Activated CD8-positive, alpha-beta T cell treated with anti-CD3 and anti-CD28 coated beads for 36 hours (primary cell): ENCODE measurements at regions of chr13 and their contacts with region 1.

Region 1: DNA sequence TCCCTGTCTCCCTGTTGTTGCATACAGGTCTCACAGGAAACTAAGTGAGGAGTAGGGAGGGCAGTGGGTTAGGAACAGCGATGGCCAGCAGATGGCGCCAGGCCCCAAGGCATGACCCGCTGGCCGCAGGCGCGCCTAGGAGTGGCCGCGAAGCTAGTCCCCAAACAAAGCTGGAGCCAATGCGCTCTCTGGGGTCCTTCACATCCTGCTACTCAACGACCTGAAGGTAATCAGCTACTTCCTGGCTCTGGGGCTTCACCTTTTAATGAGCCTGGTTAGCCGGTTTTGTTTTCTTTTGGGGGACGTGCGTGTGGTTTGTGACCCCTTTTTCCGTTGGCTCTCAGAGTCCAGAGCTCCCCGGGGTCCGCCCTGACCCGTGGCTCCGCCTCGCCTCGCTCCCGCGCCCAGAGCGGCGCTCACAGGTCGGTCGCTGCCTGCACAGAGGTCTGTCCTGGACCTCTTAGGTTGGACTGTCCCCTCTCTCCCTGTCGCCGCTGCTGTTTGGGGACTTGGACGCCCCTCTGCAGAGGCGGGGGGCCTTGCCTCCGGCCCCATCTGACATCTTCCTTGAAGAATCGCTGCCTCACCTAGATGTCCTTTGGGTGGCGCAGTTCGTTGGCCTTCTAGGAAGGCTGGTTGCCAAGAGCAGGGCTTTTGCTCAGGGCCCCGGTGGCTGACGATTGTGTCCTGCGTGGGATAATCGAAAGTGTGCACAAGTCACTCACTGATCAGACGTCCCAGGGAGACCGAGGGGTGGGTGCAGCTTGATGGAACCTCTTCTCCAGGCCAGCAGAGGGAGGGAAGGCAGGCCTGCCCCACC is 62.1 kb upstream of the GTF3A start:
- DNase-seq: peak; percentile 90
- ATAC-seq: peak; percentile 98
- H3K4me3 Mint-ChIP-seq: peak overlapping the region; percentile 48
- H3K27ac Mint-ChIP-seq: no peak overlapping the region
- H3K4me1 Mint-ChIP-seq: peaks cover 4% of the 10 kb centered on the region
- H3K27me3 Mint-ChIP-seq: peaks cover 7% of the 10 kb centered on the region
- CTCF ChIP-seq: peak; percentile 87

Region 2: DNA sequence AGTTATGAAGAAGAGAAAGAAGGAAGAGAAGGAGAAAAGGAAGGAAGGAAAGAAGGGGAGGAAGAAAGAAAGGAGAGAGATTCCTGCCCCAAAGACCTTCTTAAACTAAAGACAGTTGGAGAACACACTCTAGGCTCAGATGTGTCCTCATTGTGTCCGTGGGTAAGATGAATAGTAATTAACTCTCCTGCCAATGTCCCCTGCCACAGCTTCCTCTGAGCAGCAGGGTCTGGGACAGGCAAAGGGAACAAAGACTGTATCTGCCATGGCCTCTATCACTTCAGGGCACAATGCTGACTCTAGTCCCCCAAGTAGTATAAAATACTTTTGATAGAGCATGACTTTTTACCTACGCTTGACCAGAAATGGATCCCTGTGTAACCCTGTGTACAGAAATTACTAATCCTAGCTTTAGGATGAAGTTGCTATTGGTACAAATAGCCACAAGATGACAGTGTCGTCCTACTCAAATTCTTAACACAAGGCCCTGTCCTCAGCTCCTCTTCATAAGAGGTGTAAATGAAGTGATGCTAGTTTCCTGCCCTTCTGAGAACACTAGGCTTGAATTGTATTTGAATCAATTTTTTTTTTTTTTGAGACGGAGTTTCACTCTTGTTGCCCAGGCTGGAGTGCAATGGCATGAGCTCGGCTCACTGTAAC is 415.5 kb before region 1 on chr13:
- CTCF ChIA-PET with region 1: interaction called, 17 read pairs
- POLR2A ChIA-PET with region 1: no interaction called
- intact Hi-C with region 1: no loop called
- DNase-seq: peak; percentile 6
- ATAC-seq: peak; percentile 80
- H3K4me3 Mint-ChIP-seq: no peak overlapping the region
- H3K27ac Mint-ChIP-seq: no peak overlapping the region
- H3K4me1 Mint-ChIP-seq: no peaks in the 10 kb centered on the region
- H3K27me3 Mint-ChIP-seq: peaks cover 1% of the 10 kb centered on the region
- CTCF ChIP-seq: peak; percentile 46

Region 3: DNA sequence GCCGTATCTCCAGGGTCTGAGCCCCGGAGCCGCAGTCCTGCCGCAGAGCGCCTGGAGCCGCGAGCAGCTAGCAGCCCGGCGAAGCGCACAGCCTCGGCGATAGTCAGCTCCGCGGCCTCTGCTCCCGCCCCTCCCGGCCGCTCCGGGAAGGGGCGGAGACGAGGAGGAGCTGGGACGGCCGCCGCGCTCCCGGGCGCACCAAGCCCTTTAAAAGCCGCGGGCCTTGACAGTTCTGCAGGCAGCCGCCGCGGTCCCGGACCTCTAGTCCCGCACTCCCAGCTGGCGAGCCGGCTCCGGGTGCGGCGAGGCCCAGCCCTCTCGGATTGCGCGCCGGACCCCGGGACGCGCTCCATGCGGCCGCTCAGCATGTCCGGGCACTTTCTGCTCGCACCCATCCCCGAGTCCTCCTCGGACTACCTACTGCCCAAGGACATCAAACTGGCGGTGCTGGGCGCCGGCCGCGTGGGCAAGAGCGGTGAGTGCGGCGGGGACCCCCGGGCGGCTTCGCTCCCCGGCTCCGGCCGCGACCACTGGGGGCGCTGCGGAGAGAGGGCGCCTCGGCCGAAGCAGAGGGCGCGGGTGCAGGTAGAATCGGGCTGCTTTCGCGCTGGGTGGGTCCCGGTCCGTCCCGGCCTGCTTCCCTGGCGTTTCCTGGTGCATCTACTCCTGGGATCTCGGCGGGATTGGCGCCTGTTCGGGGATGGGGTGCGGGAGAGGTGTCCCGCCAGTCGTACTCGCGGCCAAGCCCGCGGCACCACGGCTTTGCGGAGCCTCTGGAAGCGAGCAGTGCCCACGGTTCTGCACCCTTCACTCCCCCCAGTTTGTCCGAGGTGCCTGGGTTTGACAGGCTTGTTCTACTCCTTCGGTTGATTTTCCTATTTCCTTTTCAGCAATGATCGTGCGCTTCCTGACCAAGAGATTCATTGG is 91.4 kb before region 1 on chr13 and contains the start of gene RASL11A:
- CTCF ChIA-PET with region 1: interaction called, 32 read pairs
- POLR2A ChIA-PET with region 1: no interaction called
- intact Hi-C with region 1: no loop called
- DNase-seq: peak; percentile 64
- ATAC-seq: peak; percentile 91
- H3K4me3 Mint-ChIP-seq: peak within 1 kb of the TSS; percentile 77
- H3K27ac Mint-ChIP-seq: no peak within 1 kb of the TSS
- H3K4me1 Mint-ChIP-seq: peaks cover 6% of the 10 kb centered on the region
- H3K27me3 Mint-ChIP-seq: no peaks in the 10 kb centered on the region
- CTCF ChIP-seq: peak; percentile 100
- total RNA-seq, gene RASL11A: 2.7 to 3.1 TPM

Region 4: DNA sequence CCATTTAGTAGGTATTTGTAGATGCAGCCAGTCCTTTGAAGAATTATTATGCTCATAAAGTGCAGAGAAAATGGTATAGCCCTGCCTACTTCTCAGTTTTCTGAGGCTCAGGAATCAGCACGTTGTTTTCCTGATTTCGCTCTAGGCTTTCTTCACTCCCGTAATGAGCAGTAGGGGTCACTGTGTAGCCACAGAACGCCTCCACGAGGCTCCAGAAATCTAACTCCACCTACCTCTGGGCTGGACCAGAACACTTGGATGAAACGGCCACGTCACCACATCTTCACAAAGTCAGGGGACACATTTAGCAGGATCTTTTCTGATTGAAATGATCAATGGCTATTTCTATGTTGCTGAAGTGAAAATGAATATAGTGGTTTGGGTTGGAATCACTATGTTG is 12.4 kb after region 1 on chr13:
- CTCF ChIA-PET with region 1: interaction called, 36 read pairs
- POLR2A ChIA-PET with region 1: no interaction called
- intact Hi-C with region 1: no loop called
- DNase-seq: peak; percentile 70
- ATAC-seq: peak; percentile 93
- H3K4me3 Mint-ChIP-seq: no peak overlapping the region
- H3K27ac Mint-ChIP-seq: no peak overlapping the region
- H3K4me1 Mint-ChIP-seq: peaks cover 8% of the 10 kb centered on the region
- H3K27me3 Mint-ChIP-seq: peaks cover 15% of the 10 kb centered on the region
- CTCF ChIP-seq: peak; percentile 52

Region 5: DNA sequence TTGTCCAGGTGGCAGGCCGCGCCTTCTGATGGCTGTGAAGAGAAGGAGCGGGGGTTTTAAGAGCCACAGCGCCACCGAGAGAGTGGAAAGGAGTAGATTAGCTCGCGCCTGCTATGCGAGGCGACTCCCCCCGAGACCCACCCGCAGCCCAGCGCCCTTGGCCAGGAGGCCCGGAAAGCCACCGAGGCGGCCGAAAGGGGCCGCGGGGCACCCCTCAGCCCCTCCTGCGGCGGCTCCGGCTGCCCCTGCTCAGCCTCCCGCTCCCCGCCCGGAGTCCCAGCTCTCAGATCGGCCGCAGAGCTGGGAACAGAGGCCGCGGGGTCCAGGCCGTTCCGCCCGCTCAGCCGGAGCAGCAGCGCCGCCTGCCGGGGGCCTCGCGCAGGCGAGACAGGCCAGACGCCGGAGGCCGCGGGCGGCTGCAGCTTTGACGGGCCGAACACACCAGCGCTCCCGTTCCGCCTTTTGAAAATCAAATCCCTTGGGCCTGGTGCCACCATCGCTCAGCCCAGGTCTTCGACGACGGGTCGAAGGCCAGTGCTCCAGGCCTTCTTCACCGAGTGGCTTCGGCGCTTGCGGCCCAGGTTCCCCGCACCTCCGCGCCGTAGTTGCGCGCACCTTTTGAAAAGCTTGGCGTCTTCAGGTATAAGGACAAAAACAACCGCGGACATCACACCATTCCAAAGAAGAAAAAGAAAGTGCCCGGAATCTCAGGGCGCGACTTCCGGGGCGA is 591.6 kb after region 1 on chr13:
- CTCF ChIA-PET with region 1: interaction called, 12 read pairs
- POLR2A ChIA-PET with region 1: no interaction called
- intact Hi-C with region 1: no loop called
- DNase-seq: peak; percentile 71
- ATAC-seq: peak; percentile 92
- H3K4me3 Mint-ChIP-seq: peak overlapping the region; percentile 69
- H3K27ac Mint-ChIP-seq: no peak overlapping the region
- H3K4me1 Mint-ChIP-seq: peaks cover 14% of the 10 kb centered on the region
- H3K27me3 Mint-ChIP-seq: peaks cover 64% of the 10 kb centered on the region
- CTCF ChIP-seq: peak; percentile 90